ENCODE measurements at regions of chr6 and their contacts with region 1.

Region 1: DNA sequence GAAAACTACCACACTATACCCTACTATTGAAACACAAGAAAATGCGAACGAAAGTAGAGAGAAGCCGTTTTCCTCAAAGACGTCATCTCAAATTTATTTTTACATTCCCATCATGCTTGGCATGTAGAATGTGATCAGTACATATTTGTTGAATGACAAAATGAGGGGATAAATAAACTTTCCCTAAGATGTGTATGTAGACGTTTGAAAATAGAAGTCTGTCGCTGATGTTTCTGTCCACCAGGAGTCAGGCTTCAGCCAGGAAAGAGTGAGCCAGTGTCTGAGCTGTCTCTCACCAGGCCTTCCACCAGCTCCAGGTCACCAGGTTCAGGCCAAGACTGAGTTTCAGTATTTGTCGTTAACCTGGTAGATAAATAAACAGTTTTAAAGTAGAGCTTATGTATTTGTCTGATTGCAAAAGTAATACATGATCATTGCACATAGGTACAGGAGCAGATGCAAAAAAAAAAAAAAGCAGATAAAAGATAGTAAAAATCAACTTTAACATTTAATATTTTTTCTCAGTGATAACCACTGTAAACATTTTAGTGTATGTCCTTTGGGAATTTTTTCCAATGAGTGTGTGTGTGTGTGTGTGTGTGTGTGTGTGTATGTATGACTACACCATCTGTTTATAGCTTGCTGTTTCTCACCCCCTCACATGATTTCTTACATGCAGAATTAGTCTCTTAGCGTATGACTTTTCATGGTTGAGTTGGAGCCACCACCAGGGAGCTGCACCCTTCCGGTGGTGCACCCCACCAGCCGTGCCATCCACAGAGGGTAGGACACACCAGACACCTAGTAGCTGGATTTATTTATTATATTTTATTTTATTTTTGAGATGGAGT is 26.2 kb downstream of the WRNIP1 start:
- DNase-seq: peak; percentile 83
- H3K4me3 Mint-ChIP-seq: no peak overlapping the region
- H3K27ac Mint-ChIP-seq: peak overlapping the region; percentile 75
- H3K4me1 Mint-ChIP-seq: peaks cover 27% of the 10 kb centered on the region
- H3K27me3 Mint-ChIP-seq: no peaks in the 10 kb centered on the region
- CTCF ChIP-seq: peak; percentile 82

Region 2: DNA sequence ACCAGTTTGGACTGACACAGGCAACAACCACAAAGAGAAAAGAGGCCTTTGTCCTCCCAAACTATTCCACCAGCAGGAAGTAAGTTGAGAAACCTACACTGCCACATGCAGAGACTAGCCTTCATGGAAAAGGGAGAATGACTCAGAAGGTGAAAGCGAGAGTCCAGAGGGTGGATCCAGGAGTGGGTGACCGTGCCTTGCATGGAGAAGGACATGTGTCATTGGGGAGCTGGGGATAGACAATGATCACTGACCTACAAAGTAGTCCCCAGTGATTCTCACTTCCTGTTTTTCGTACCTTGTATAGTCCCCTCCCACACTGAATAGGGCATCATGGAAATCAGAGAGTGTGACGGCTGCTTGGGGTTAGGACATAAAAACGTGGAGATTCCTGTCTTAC is 132.6 kb before region 1 on chr6:
- CTCF ChIA-PET with region 1: no interaction called
- POLR2A ChIA-PET with region 1: no interaction called
- intact Hi-C with region 1: no loop called
- DNase-seq: peak; percentile 85
- H3K4me3 Mint-ChIP-seq: no peak overlapping the region
- H3K27ac Mint-ChIP-seq: peak overlapping the region; percentile 78
- H3K4me1 Mint-ChIP-seq: peaks cover 28% of the 10 kb centered on the region
- H3K27me3 Mint-ChIP-seq: no peaks in the 10 kb centered on the region
- CTCF ChIP-seq: no peak

Region 3: GRCh38 chr6:2804516-2804915 is 13.2 kb after region 1 on chr6:
- CTCF ChIA-PET with region 1: interaction called, 10 read pairs
- POLR2A ChIA-PET with region 1: interaction called, 15 read pairs
- intact Hi-C with region 1: no loop called
- DNase-seq: no peak
- H3K4me3 Mint-ChIP-seq: no peak overlapping the region
- H3K27ac Mint-ChIP-seq: no peak overlapping the region
- H3K4me1 Mint-ChIP-seq: peaks cover 9% of the 10 kb centered on the region
- H3K27me3 Mint-ChIP-seq: no peaks in the 10 kb centered on the region
- CTCF ChIP-seq: no peak

Region 4: GRCh38 chr6:2818593-2818992 is 27.2 kb after region 1 on chr6:
- CTCF ChIA-PET with region 1: interaction called, 9 read pairs
- POLR2A ChIA-PET with region 1: interaction called, 43 read pairs
- intact Hi-C with region 1: no loop called
- DNase-seq: no peak
- H3K4me3 Mint-ChIP-seq: no peak overlapping the region
- H3K27ac Mint-ChIP-seq: peak overlapping the region; percentile 90
- H3K4me1 Mint-ChIP-seq: peaks cover 28% of the 10 kb centered on the region
- H3K27me3 Mint-ChIP-seq: no peaks in the 10 kb centered on the region
- CTCF ChIP-seq: no peak

Region 5: GRCh38 chr6:2846873-2847224 is 55.5 kb after region 1 on chr6:
- CTCF ChIA-PET with region 1: interaction called, 39 read pairs
- POLR2A ChIA-PET with region 1: interaction called, 33 read pairs
- intact Hi-C with region 1: loop called (anchors 1 kb)
- DNase-seq: no peak
- H3K4me3 Mint-ChIP-seq: peak overlapping the region; percentile 54
- H3K27ac Mint-ChIP-seq: peak overlapping the region; percentile 71
- H3K4me1 Mint-ChIP-seq: peaks cover 19% of the 10 kb centered on the region
- H3K27me3 Mint-ChIP-seq: no peaks in the 10 kb centered on the region
- CTCF ChIP-seq: no peak

Region 6: GRCh38 chr6:2911171-2911570 is 119.8 kb after region 1 on chr6:
- CTCF ChIA-PET with region 1: interaction called, 4 read pairs
- POLR2A ChIA-PET with region 1: no interaction called
- intact Hi-C with region 1: loop called (anchors 2 kb)
- DNase-seq: peak; percentile 41
- H3K4me3 Mint-ChIP-seq: no peak overlapping the region
- H3K27ac Mint-ChIP-seq: no peak overlapping the region
- H3K4me1 Mint-ChIP-seq: no peaks in the 10 kb centered on the region
- H3K27me3 Mint-ChIP-seq: no peaks in the 10 kb centered on the region
- CTCF ChIP-seq: no peak

Region 7: GRCh38 chr6:3061501-3061941 is 270.2 kb after region 1 on chr6:
- CTCF ChIA-PET with region 1: interaction called, 3 read pairs
- POLR2A ChIA-PET with region 1: no interaction called
- intact Hi-C with region 1: loop called (anchors 5 kb)
- DNase-seq: peak; percentile 82
- H3K4me3 Mint-ChIP-seq: no peak overlapping the region
- H3K27ac Mint-ChIP-seq: no peak overlapping the region
- H3K4me1 Mint-ChIP-seq: peaks cover 5% of the 10 kb centered on the region
- H3K27me3 Mint-ChIP-seq: peaks cover 12% of the 10 kb centered on the region
- CTCF ChIP-seq: peak; percentile 23

Measured in MCF 10A (cell line).